ENCODE measurements at regions of chr1 and their contacts with region 1.

Region 1: DNA sequence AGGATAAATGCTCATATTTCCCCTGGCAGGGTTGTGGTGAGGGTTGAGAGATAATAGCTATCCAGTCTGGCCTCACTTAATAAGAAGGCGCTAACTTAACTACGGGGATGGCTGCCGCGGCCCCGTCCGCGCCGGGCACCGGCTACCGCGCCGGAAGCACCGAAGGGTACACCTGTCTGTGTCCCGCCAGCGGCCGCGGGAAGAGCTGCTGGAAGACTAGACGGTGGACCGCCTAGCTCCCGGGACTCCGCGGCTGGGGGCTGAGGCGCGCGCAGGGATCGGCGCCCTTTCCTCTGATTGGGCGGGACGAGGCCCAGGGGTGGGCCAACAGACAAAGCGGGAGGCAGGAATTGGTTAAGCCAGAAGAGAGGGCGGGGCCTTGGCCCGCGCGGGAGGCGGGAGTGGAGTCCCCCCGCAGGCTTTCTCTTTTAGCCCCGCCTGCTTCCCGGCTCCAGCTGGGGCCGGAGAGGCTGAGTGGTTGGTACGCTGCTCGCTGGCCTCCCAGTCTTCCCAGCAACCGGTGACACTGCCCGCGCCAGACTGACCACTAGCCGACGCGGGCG is at the start of gene ZNF672:
- DNase-seq: peak; percentile 93
- ATAC-seq: peak; percentile 86
- H3K4me3 Mint-ChIP-seq: no peak within 1 kb of the TSS
- H3K27ac Mint-ChIP-seq: no peak within 1 kb of the TSS
- H3K4me1 Mint-ChIP-seq: peaks cover 18% of the 10 kb centered on the region
- H3K27me3 Mint-ChIP-seq: peaks cover 2% of the 10 kb centered on the region
- total RNA-seq, gene ZNF672: 51.0 to 53.6 TPM

Region 2: GRCh38 chr1:248825909-248826760 is 11.7 kb before region 1 on chr1 and contains the start of gene SH3BP5L:
- POLR2A ChIA-PET with region 1: interaction called, 74 read pairs
- DNase-seq: peak; percentile 89
- ATAC-seq: peak; percentile 90
- H3K4me3 Mint-ChIP-seq: peak within 1 kb of the TSS; percentile 94
- H3K27ac Mint-ChIP-seq: peak within 1 kb of the TSS; percentile 98
- H3K4me1 Mint-ChIP-seq: peaks cover 32% of the 10 kb centered on the region
- H3K27me3 Mint-ChIP-seq: no peaks in the 10 kb centered on the region
- total RNA-seq, gene SH3BP5L: 32.8 to 34.7 TPM

Region 3: GRCh38 chr1:248858891-248859889 is 21.3 kb after region 1 on chr1 and contains the start of gene ZNF692:
- POLR2A ChIA-PET with region 1: interaction called, 74 read pairs
- DNase-seq: peak; percentile 98
- ATAC-seq: peak; percentile 84
- H3K4me3 Mint-ChIP-seq: peak within 1 kb of the TSS; percentile 94
- H3K27ac Mint-ChIP-seq: peak within 1 kb of the TSS; percentile 97
- H3K4me1 Mint-ChIP-seq: peaks cover 45% of the 10 kb centered on the region
- H3K27me3 Mint-ChIP-seq: peaks cover 3% of the 10 kb centered on the region
- total RNA-seq, gene ZNF692: 58.6 to 70.2 TPM

Region 4: DNA sequence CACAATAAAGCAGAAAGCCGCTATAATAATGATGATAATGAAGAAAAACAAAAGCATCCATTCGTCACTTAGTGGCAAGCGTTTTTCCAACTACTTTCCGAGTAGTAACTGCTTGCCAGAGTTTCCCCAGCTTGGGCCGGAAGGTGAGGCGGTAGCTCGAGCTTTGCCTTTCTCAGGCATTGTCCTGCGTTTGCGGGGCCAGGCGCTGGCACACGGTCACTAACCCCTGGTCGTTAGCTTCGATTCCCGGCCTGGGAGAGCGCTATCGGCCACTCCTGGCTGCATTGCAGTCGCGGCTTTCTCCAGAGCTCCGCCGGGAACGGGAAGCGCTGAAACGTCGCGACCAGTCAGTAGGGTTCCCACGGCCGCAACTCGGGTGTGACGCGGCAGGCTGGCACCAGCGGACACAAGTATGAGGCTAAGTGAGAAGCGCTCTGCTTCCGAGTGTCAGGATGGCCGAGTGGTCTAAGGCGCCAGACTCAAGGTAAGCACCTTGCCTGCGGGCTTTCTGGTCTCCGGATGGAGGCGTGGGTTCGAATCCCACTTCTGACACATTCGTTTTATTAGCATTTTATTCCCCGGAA is 35.6 kb after region 1 on chr1:
- POLR2A ChIA-PET with region 1: interaction called, 17 read pairs
- DNase-seq: peak; percentile 93
- ATAC-seq: peak; percentile 84
- H3K4me3 Mint-ChIP-seq: peak overlapping the region; percentile 94
- H3K27ac Mint-ChIP-seq: peak overlapping the region; percentile 94
- H3K4me1 Mint-ChIP-seq: peaks cover 15% of the 10 kb centered on the region
- H3K27me3 Mint-ChIP-seq: peaks cover 12% of the 10 kb centered on the region

Measured in activated naive CD8-positive, alpha-beta T cell treated with anti-CD3 and anti-CD28 coated beads, Interleukin-2, amount 10 ng/mL, durations not matched to agents 7 days and 5 days (primary cell).